K562 (cell line): ENCODE measurements at regions of chr18 and their contacts with region 1.

Region 1: DNA sequence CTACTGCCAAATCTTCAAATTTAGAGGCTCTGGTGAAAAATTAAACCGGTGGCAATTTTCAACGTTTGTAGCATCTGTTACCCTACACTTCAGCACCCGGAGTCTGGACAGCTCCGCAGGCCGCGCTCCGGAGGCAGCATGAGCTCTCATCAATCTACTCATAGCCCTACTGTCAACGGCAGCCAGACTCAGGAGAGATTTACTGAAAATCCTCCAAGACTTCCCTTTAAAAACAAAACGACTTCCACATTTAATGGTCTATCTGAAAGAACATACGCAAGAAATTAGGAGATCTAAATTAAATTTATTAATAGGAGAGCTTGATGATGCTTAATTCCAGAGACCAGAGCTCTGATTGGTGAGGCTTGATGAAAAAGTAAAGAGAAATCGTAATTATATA is 970 bp upstream of the ADCYAP1 start:
- DNase-seq: peak; percentile 69 to 76 (median 72)
- ATAC-seq: peak; percentile 84
- H3K4me3 ChIP-seq: no peak overlapping the region
- H3K27ac ChIP-seq: no peak overlapping the region
- H3K4me1 ChIP-seq: peaks cover 0 to 38% of the 10 kb centered on the region in 2 experiments; a peak in 2 of 5 replicates
- H3K27me3 ChIP-seq: peaks cover 38 to 53% of the 10 kb centered on the region in 2 experiments; a peak in 3 of 5 replicates
- CTCF ChIP-seq: no peak
- EP300 ChIP-seq: no peak
- POLR2A ChIP-seq: no peak
- RAD21 ChIP-seq: peak in 1 of 2 experiments; percentile 14; a peak in 1 of 4 replicates

Region 2: DNA sequence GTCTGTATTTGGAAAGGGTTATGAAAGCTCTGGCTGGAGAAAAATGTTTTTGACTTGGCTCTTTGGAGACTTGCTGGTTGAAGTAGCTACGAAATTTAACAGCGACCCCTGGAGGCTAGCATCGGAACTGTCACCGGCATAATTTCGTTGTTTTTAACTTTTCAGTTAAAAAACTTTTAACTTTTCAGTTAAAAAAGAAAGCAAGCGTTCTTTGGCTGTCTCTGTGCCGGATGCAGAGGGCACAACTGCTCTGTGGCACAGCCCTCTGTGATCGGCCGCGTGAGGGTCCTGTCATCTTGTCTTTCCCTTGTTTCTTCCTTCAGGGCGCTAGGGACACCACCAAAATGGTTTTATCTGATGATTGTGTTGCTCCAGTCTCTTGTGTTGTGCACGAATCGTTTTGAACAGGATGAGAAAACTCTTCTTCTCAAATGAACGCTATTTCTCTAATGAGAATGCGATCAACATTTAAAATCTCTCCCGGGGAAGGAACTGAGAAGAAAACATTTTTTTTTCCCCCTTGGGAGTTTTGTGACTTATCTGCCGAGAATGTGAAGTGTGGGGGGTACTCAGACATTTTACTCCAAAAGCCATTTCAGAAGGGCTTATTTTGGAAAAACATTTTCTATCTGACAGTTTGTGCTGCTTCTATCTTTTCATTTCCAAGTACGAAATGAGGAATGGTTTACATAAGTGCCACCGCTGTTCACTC is 58.1 kb after region 1 on chr18:
- CTCF ChIA-PET with region 1: interaction called, 3 read pairs
- POLR2A ChIA-PET with region 1: interaction called, 3 read pairs
- in situ Hi-C with region 1: no loop called
- intact Hi-C with region 1: loop called (anchors 2 kb)
- DNase-seq: peak; percentile 59 to 64 (median 62)
- ATAC-seq: peak; percentile 61
- H3K4me3 ChIP-seq: peak overlapping the region; percentile 38
- H3K27ac ChIP-seq: peak overlapping the region; percentile 37; the same call in 1 of the 3 replicates
- H3K4me1 ChIP-seq: peaks cover 3 to 11% of the 10 kb centered on the region in 2 experiments; a peak in 4 of 5 replicates
- H3K27me3 ChIP-seq: peaks cover 0 to 7% of the 10 kb centered on the region in 2 experiments; a peak in 4 of 5 replicates
- CTCF ChIP-seq: peak; percentile 74 to 98 (median 94)
- EP300 ChIP-seq: no peak
- POLR2A ChIP-seq: no peak
- RAD21 ChIP-seq: peak; percentile 67 to 82

Region 3: GRCh38 chr18:1026930-1027329 is 123.2 kb after region 1 on chr18:
- CTCF ChIA-PET with region 1: no interaction called
- POLR2A ChIA-PET with region 1: no interaction called
- in situ Hi-C with region 1: no loop called
- intact Hi-C with region 1: no loop called
- DNase-seq: no peak
- ATAC-seq: no peak
- H3K4me3 ChIP-seq: no peak overlapping the region
- H3K27ac ChIP-seq: no peak overlapping the region
- H3K4me1 ChIP-seq: no peaks in the 10 kb centered on the region
- H3K27me3 ChIP-seq: no peaks in the 10 kb centered on the region
- CTCF ChIP-seq: no peak
- EP300 ChIP-seq: no peak
- POLR2A ChIP-seq: no peak
- RAD21 ChIP-seq: no peak

Region 4: DNA sequence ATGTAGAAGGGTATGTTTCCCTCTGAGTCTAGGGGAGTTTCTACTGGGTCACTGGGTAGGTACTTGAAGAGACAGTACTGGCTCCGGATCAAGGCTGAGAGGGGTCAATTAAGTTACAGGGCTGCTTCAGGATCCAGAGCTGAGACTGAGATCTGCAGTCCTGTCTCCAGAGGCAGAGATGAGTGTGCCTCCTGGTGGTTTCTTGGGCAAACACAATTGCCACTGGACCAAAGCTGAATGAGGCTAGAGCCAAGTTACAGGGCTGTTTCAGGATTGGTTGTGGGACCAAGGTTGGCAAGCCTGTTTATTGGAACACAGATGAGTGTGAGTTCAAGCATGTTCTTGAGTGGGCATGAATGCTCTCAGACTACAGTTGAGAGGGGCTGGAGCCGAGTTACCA is 158.9 kb after region 1 on chr18:
- CTCF ChIA-PET with region 1: interaction called, 4 read pairs
- POLR2A ChIA-PET with region 1: no interaction called
- in situ Hi-C with region 1: no loop called
- intact Hi-C with region 1: loop called (anchors 2 kb)
- DNase-seq: peak in 2 of 4 experiments; percentile 37 to 52
- ATAC-seq: peak; percentile 88
- H3K4me3 ChIP-seq: no peak overlapping the region
- H3K27ac ChIP-seq: no peak overlapping the region
- H3K4me1 ChIP-seq: no peaks in the 10 kb centered on the region
- H3K27me3 ChIP-seq: peaks cover 0 to 6% of the 10 kb centered on the region in 2 experiments; a peak in 1 of 5 replicates
- CTCF ChIP-seq: peak; percentile 61 to 86 (median 74); a peak in 5 of 6 replicates
- EP300 ChIP-seq: peak; percentile 27; the same call in 1 of the 2 replicates
- POLR2A ChIP-seq: no peak
- RAD21 ChIP-seq: peak; percentile 80 to 94